ENCODE measurements at regions of chr14 and their contacts with region 1.

Region 1: GRCh38 chr14:37985826-37986470 is 221.8 kb upstream of the SSTR1 start:
- DNase-seq: peak; percentile 67
- H3K4me3 ChIP-seq: no peak overlapping the region
- H3K27ac ChIP-seq: no peak overlapping the region
- H3K4me1 ChIP-seq: no peaks in the 10 kb centered on the region
- H3K27me3 ChIP-seq: no peaks in the 10 kb centered on the region
- CTCF ChIP-seq: peak; percentile 63 to 83
- POLR2A ChIP-seq: no peak

Region 2: GRCh38 chr14:36465178-36465577 is 1520.8 kb before region 1 on chr14:
- CTCF ChIA-PET with region 1: no interaction called
- POLR2A ChIA-PET with region 1: no interaction called
- dilution Hi-C with region 1: no loop called
- intact Hi-C with region 1: no loop called
- DNase-seq: no peak
- H3K4me3 ChIP-seq: no peak overlapping the region
- H3K27ac ChIP-seq: no peak overlapping the region
- H3K4me1 ChIP-seq: no peaks in the 10 kb centered on the region
- H3K27me3 ChIP-seq: no peaks in the 10 kb centered on the region
- CTCF ChIP-seq: no peak
- POLR2A ChIP-seq: no peak

Region 3: DNA sequence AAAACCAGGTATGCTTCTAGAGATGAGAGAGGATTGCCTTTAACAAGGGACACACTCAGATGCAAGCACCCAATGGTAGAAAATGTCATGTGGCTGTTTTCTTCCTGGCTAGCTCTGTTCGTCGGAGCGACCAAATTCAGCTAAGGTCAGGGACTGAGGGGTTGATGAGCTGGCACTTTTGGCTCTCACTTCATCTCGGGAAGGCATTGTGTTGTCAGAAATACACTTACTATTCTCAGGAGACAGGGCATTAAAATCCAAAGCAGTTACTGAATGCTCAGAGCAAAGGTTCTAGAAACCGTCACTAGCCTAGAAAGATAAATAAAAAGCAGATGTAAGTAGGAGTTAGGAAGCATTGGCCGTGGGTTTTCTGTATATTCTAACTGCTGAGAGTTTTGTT is 53.9 kb before region 1 on chr14:
- CTCF ChIA-PET with region 1: no interaction called
- POLR2A ChIA-PET with region 1: no interaction called
- dilution Hi-C with region 1: no loop called
- intact Hi-C with region 1: no loop called
- DNase-seq: no peak
- H3K4me3 ChIP-seq: no peak overlapping the region
- H3K27ac ChIP-seq: no peak overlapping the region
- H3K4me1 ChIP-seq: no peaks in the 10 kb centered on the region
- H3K27me3 ChIP-seq: peaks cover 0 to 3% of the 10 kb centered on the region in 2 experiments
- CTCF ChIP-seq: no peak
- POLR2A ChIP-seq: no peak

Region 4: DNA sequence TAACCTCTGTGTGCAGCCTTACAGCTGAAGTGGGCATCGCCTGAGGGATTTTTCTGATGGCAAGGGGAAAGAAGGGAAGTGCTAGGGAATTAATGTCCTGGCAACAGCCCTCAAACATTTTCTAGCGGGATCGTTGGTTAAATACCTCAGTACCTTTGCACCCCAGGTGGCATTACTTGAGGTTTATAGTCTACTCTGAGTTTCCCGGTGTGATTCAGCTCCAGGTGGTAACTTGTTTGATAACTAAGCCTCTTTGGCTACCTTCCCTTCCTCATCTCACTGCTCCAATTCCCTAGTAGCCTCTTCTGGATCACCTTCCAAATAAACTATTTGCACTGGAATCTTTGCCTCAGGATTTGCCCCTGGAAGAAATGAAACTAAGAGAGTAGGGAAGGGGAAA is 15.3 kb before region 1 on chr14:
- CTCF ChIA-PET with region 1: no interaction called
- POLR2A ChIA-PET with region 1: no interaction called
- dilution Hi-C with region 1: no loop called
- intact Hi-C with region 1: no loop called
- DNase-seq: no peak
- H3K4me3 ChIP-seq: no peak overlapping the region
- H3K27ac ChIP-seq: no peak overlapping the region
- H3K4me1 ChIP-seq: no peaks in the 10 kb centered on the region
- H3K27me3 ChIP-seq: no peaks in the 10 kb centered on the region
- CTCF ChIP-seq: no peak
- POLR2A ChIP-seq: no peak

Region 5: DNA sequence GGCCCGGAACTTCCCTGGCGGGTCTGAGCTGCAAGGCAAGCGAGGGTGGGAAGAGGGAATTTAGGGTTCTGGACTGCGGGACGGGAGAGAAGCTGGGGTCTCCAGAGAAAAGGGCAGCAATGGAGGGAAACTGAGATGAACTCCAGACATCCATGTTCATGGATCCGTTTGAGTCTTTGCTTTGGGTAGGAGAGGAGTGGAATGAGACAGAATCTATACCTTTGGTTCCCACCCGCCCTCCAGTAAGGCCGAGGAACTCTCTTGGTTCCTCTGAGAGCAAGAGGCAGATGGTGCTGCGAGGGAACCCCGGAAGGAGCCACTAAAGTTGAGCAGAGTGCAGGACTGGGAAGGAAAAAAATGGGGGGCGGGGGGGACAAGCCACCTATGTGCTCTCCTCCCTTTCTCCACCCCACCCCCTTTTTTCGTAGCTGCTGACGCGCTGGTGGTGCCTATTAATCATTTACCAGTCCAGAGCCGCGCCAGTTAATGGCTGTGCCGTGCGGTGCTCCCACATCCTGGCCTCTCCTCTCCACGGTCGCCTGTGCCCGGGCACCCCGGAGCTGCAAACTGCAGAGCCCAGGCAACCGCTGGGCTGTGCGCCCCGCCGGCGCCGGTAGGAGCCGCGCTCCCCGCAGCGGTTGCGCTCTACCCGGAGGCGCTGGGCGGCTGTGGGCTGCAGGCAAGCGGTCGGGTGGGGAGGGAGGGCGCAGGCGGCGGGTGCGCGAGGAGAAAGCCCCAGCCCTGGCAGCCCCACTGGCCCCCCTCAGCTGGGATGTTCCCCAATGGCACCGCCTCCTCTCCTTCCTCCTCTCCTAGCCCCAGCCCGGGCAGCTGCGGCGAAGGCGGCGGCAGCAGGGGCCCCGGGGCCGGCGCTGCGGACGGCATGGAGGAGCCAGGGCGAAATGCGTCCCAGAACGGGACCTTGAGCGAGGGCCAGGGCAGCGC is 222.9 kb after region 1 on chr14:
- CTCF ChIA-PET with region 1: interaction called, 10 read pairs
- POLR2A ChIA-PET with region 1: no interaction called
- dilution Hi-C with region 1: no loop called
- intact Hi-C with region 1: no loop called
- DNase-seq: peak; percentile 47
- H3K4me3 ChIP-seq: peak overlapping the region; percentile 34 to 58 (median 44)
- H3K27ac ChIP-seq: no peak overlapping the region
- H3K4me1 ChIP-seq: peaks cover 36% of the 10 kb centered on the region
- H3K27me3 ChIP-seq: no peaks in the 10 kb centered on the region
- CTCF ChIP-seq: peak in 1 of 2 donors; percentile 48
- POLR2A ChIP-seq: no peak